ENCODE measurements at regions of chr1 and their contacts with region 1.

Region 1: DNA sequence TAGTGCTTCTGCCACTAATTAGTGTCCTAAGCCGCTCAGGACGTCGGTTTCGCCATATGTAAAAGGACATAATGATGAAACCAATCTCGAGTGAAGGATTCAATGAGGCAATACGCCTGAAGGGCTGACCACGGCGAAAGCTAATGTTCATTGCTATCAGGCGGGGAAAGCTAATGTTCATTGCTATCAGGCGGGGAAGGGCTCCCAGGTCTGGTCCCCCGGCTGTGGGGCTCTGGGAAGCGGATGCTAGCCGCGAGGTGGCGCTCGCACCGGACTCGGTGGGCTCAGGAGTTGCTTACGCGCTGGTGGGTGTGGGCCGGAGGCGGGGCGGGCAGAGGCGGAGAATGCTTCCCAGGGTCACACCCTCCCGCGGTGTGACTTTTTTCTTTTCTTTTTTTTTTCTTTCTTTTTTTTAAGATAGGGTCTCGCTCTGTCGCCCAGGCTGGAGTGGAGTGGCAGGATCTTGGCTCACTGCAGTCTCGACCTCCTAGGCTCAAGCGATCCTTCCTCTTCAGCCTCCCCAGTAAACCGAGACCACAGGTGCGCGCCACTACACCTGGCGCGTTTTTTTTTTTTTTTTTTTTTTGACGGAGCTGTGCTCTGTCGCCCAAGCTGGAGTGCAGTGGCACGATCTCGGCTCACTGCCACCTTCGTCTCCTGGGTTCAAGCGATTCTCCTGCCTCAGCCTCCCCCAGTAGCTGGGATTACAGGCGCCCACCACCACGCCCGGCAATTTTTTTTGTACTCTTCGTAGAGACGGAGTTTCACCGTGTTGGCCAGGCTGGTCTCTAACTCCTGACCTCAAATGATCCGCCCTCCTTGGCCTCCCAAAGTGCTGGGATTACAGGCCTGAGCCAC is 1.1 kb upstream of the PEAR1 start:
- DNase-seq: peak; percentile 87
- H3K4me3 ChIP-seq: no peak overlapping the region
- H3K27ac ChIP-seq: peak overlapping the region; percentile 64
- H3K4me1 ChIP-seq: peaks cover 31% of the 10 kb centered on the region
- H3K27me3 ChIP-seq: no peaks in the 10 kb centered on the region
- CTCF ChIP-seq: peak; percentile 91 to 97
- POLR2A ChIP-seq: no peak

Region 2: DNA sequence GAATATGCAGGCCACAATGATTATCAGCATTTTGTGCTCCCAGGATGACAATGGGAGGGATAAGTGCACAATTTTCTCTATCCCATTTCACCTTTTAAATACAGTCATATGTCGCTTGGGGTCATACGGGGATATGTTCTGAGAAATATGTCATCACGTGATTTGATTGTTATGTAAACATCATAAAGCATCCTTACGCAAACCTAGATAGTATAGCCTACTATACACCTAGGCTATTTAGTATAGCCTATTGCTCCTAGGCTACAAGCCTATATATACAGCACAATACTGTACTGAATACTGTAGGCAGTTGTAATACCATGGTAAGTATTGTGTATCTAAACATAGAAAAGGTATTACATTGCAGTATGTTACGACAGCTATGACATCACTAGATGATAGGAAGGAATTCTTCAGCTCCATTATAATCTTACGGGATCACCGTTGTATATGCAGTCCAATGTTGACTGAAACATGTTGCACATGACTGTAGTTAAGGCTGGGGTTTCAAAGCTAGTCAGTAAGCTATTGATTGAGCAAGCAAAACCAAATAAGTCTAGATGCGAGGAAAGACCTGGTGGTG is 1552.8 kb before region 1 on chr1:
- CTCF ChIA-PET with region 1: no interaction called
- POLR2A ChIA-PET with region 1: no interaction called
- dilution Hi-C with region 1: no loop called
- intact Hi-C with region 1: no loop called
- DNase-seq: no peak
- H3K4me3 ChIP-seq: no peak overlapping the region
- H3K27ac ChIP-seq: no peak overlapping the region
- H3K4me1 ChIP-seq: no peaks in the 10 kb centered on the region
- H3K27me3 ChIP-seq: no peaks in the 10 kb centered on the region
- CTCF ChIP-seq: no peak
- POLR2A ChIP-seq: no peak

Region 3: GRCh38 chr1:156625436-156626078 is 266.9 kb before region 1 on chr1:
- CTCF ChIA-PET with region 1: interaction called, 7 read pairs
- POLR2A ChIA-PET with region 1: no interaction called
- dilution Hi-C with region 1: no loop called
- intact Hi-C with region 1: loop called (anchors 5 kb)
- DNase-seq: peak; percentile 47
- H3K4me3 ChIP-seq: no peak overlapping the region
- H3K27ac ChIP-seq: no peak overlapping the region
- H3K4me1 ChIP-seq: peaks cover 10% of the 10 kb centered on the region
- H3K27me3 ChIP-seq: peaks cover 36% of the 10 kb centered on the region in 2 experiments
- CTCF ChIP-seq: peak; percentile 69 to 90
- POLR2A ChIP-seq: no peak

Region 4: DNA sequence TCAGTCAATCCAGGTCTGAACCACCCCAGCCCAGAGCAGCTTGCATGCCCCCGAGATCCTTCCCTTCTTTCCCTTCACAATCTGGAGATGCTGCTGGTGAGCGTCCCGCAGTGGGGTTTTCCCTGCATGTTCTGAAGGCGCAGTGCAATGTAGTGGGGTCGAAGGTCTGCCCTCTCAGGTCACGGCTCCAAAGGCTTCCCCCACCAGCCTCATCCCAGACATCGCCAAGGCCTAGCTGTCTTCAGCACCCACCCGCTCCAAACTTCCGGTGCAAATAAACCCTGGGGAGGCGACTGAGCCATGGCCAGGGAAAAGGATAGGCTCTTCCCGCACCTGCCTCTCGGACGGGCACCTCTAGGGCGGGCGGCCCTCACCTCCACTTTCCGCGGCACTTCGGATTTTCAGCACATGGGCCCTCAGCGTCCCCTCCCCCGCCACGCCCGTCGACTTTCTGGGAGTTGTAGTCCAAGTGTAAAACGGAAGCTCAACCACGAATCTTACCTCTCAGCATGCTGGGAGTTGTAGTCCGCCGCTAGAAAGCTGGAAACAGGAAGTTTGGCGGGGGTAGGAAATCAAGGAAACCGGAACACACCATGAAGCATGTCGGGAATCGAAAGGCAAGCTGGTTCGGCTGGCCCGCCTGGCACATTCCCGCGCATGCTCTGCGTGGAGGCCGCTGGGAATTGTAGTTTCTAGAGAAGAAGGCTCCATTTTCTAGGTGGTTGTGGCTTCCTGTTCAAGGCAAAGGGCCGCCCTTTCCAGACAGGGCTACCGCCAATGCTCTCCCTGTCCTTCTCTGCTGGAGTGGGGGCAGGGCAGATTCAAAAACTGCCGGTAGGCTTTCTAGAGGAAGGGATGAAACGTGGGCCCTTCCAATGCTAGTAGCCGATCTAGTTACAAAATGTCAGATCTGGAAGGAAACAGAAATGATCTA is 151.5 kb before region 1 on chr1 and contains the start of gene MRPL24:
- CTCF ChIA-PET with region 1: interaction called, 5 read pairs
- POLR2A ChIA-PET with region 1: no interaction called
- dilution Hi-C with region 1: no loop called
- intact Hi-C with region 1: loop called (anchors 5 kb)
- DNase-seq: peak; percentile 99
- H3K4me3 ChIP-seq: peak within 1 kb of the TSS; percentile 59 to 67 (median 61)
- H3K27ac ChIP-seq: peak within 1 kb of the TSS; percentile 22
- H3K4me1 ChIP-seq: peaks cover 14% of the 10 kb centered on the region
- H3K27me3 ChIP-seq: no peaks in the 10 kb centered on the region
- CTCF ChIP-seq: no peak
- POLR2A ChIP-seq: peak; percentile 69
- total RNA-seq, gene MRPL24: 63.3 and 77.7 TPM in 2 replicates

Region 5: DNA sequence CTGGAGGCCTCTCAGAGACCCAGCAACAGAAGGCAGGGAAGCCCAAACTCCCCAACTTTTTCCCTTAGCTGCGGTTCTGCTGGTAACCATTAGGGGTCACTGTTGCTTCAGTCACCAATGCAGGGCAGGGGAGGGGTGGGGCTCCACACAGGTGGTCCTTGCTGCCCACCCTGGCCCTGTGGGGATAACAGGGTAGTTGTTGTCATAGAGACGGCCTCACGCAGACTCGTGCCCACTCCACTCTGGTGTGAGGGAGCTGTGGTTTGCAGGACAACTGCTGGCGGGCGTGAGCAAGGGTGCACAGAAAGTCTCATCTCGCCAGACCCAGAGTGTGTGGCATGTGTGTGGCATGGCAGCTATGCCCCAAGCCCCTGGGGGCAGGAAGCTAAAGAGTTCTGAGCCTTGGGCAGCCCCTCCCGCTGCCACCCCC is 53.4 kb before region 1 on chr1:
- CTCF ChIA-PET with region 1: interaction called, 43 read pairs
- POLR2A ChIA-PET with region 1: no interaction called
- dilution Hi-C with region 1: no loop called
- intact Hi-C with region 1: loop called (anchors 1 kb)
- DNase-seq: peak; percentile 30
- H3K4me3 ChIP-seq: no peak overlapping the region
- H3K27ac ChIP-seq: no peak overlapping the region
- H3K4me1 ChIP-seq: peaks cover 16% of the 10 kb centered on the region
- H3K27me3 ChIP-seq: peaks cover 30 to 41% of the 10 kb centered on the region in 2 experiments
- CTCF ChIP-seq: peak; percentile 82 to 88
- POLR2A ChIP-seq: no peak

Region 6: GRCh38 chr1:156910309-156910782 is 17.9 kb after region 1 on chr1:
- CTCF ChIA-PET with region 1: interaction called, 20 read pairs
- POLR2A ChIA-PET with region 1: no interaction called
- dilution Hi-C with region 1: no loop called
- intact Hi-C with region 1: no loop called
- DNase-seq: no peak
- H3K4me3 ChIP-seq: no peak overlapping the region
- H3K27ac ChIP-seq: no peak overlapping the region
- H3K4me1 ChIP-seq: peaks cover 24% of the 10 kb centered on the region
- H3K27me3 ChIP-seq: no peaks in the 10 kb centered on the region
- CTCF ChIP-seq: peak; percentile 55 to 83
- POLR2A ChIP-seq: no peak

Region 7: GRCh38 chr1:156927215-156928042 is 35.0 kb after region 1 on chr1:
- CTCF ChIA-PET with region 1: interaction called, 312 read pairs
- POLR2A ChIA-PET with region 1: interaction called, 3 read pairs
- dilution Hi-C with region 1: no loop called
- intact Hi-C with region 1: loop called (anchors 1 kb)
- DNase-seq: peak; percentile 79
- H3K4me3 ChIP-seq: peak overlapping the region in 1 of 3 experiments; percentile 17
- H3K27ac ChIP-seq: no peak overlapping the region
- H3K4me1 ChIP-seq: peaks cover 2% of the 10 kb centered on the region
- H3K27me3 ChIP-seq: peaks cover 17 to 25% of the 10 kb centered on the region in 2 experiments
- CTCF ChIP-seq: peak; percentile 82 to 93
- POLR2A ChIP-seq: no peak

Region 8: GRCh38 chr1:156961709-156962108 is 69.3 kb after region 1 on chr1:
- CTCF ChIA-PET with region 1: no interaction called
- POLR2A ChIA-PET with region 1: no interaction called
- dilution Hi-C with region 1: no loop called
- intact Hi-C with region 1: no loop called
- DNase-seq: no peak
- H3K4me3 ChIP-seq: no peak overlapping the region
- H3K27ac ChIP-seq: no peak overlapping the region
- H3K4me1 ChIP-seq: peaks cover 6% of the 10 kb centered on the region
- H3K27me3 ChIP-seq: no peaks in the 10 kb centered on the region
- CTCF ChIP-seq: peak; percentile 18 to 26
- POLR2A ChIP-seq: no peak

Region 9: GRCh38 chr1:157081707-157082106 is 189.3 kb after region 1 on chr1:
- CTCF ChIA-PET with region 1: no interaction called
- POLR2A ChIA-PET with region 1: no interaction called
- dilution Hi-C with region 1: no loop called
- intact Hi-C with region 1: no loop called
- DNase-seq: no peak
- H3K4me3 ChIP-seq: no peak overlapping the region
- H3K27ac ChIP-seq: no peak overlapping the region
- H3K4me1 ChIP-seq: no peaks in the 10 kb centered on the region
- H3K27me3 ChIP-seq: peaks cover 2 to 4% of the 10 kb centered on the region in 2 experiments
- CTCF ChIP-seq: no peak
- POLR2A ChIP-seq: no peak

Region 10: GRCh38 chr1:157124855-157125254 is 232.4 kb after region 1 on chr1:
- CTCF ChIA-PET with region 1: no interaction called
- POLR2A ChIA-PET with region 1: no interaction called
- dilution Hi-C with region 1: no loop called
- intact Hi-C with region 1: no loop called
- DNase-seq: no peak
- H3K4me3 ChIP-seq: no peak overlapping the region
- H3K27ac ChIP-seq: no peak overlapping the region
- H3K4me1 ChIP-seq: no peaks in the 10 kb centered on the region
- H3K27me3 ChIP-seq: no peaks in the 10 kb centered on the region
- CTCF ChIP-seq: no peak
- POLR2A ChIP-seq: no peak